Activated CD8-positive, alpha-beta T cell treated with anti-CD3 and anti-CD28 coated beads for 36 hours (primary cell): ENCODE measurements at regions of chr20 and their contacts with region 1.

Region 1: GRCh38 chr20:1108437-1108920 is 9.9 kb upstream of the PSMF1 start:
- DNase-seq: peak; percentile 74
- ATAC-seq: peak; percentile 87
- H3K4me3 Mint-ChIP-seq: no peak overlapping the region
- H3K27ac Mint-ChIP-seq: no peak overlapping the region
- H3K4me1 Mint-ChIP-seq: no peaks in the 10 kb centered on the region
- H3K27me3 Mint-ChIP-seq: no peaks in the 10 kb centered on the region
- CTCF ChIP-seq: peak; percentile 69

Region 2: DNA sequence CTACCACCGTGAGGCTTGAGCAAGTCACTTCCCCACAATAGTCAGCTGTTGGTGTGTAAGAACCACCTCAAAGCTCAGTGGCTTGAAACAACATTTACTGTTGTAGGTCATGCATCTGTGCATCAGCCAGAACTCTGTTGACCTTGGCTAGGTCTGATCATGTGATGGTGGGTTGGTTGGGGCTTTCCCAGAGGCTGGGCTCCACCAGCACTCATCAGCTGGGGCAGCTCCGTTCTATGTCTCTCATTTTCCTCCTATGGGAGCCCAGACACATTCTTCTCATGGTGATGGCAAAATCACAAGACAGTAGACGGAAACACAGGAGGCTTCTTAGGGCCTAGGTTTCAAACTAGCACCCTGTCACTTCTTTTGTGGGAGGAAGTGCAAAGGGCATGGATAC is 32.9 kb before region 1 on chr20:
- CTCF ChIA-PET with region 1: interaction called, 15 read pairs
- POLR2A ChIA-PET with region 1: no interaction called
- intact Hi-C with region 1: no loop called
- DNase-seq: peak; percentile 14
- ATAC-seq: no peak
- H3K4me3 Mint-ChIP-seq: no peak overlapping the region
- H3K27ac Mint-ChIP-seq: no peak overlapping the region
- H3K4me1 Mint-ChIP-seq: no peaks in the 10 kb centered on the region
- H3K27me3 Mint-ChIP-seq: peaks cover 1% of the 10 kb centered on the region
- CTCF ChIP-seq: no peak

Region 3: GRCh38 chr20:1086277-1087213 is 21.9 kb before region 1 on chr20:
- CTCF ChIA-PET with region 1: interaction called, 13 read pairs
- POLR2A ChIA-PET with region 1: no interaction called
- intact Hi-C with region 1: no loop called
- DNase-seq: no peak
- ATAC-seq: peak; percentile 80
- H3K4me3 Mint-ChIP-seq: no peak overlapping the region
- H3K27ac Mint-ChIP-seq: peak overlapping the region; percentile 55
- H3K4me1 Mint-ChIP-seq: peaks cover 26% of the 10 kb centered on the region
- H3K27me3 Mint-ChIP-seq: no peaks in the 10 kb centered on the region
- CTCF ChIP-seq: no peak

Region 4: GRCh38 chr20:1094751-1095150 is 13.7 kb before region 1 on chr20:
- CTCF ChIA-PET with region 1: interaction called, 19 read pairs
- POLR2A ChIA-PET with region 1: no interaction called
- intact Hi-C with region 1: no loop called
- DNase-seq: no peak
- ATAC-seq: no peak
- H3K4me3 Mint-ChIP-seq: no peak overlapping the region
- H3K27ac Mint-ChIP-seq: no peak overlapping the region
- H3K4me1 Mint-ChIP-seq: no peaks in the 10 kb centered on the region
- H3K27me3 Mint-ChIP-seq: no peaks in the 10 kb centered on the region
- CTCF ChIP-seq: no peak

Region 5: GRCh38 chr20:1118336-1119127 is 10.1 kb after region 1 on chr20 and contains the start of gene PSMF1:
- CTCF ChIA-PET with region 1: interaction called, 22 read pairs
- POLR2A ChIA-PET with region 1: no interaction called
- intact Hi-C with region 1: no loop called
- DNase-seq: peak; percentile 95
- ATAC-seq: peak; percentile 98
- H3K4me3 Mint-ChIP-seq: peak within 1 kb of the TSS; percentile 83
- H3K27ac Mint-ChIP-seq: peak within 1 kb of the TSS; percentile 82
- H3K4me1 Mint-ChIP-seq: peaks cover 49% of the 10 kb centered on the region
- H3K27me3 Mint-ChIP-seq: no peaks in the 10 kb centered on the region
- CTCF ChIP-seq: no peak
- total RNA-seq, gene PSMF1: 150 to 154 TPM

Region 6: DNA sequence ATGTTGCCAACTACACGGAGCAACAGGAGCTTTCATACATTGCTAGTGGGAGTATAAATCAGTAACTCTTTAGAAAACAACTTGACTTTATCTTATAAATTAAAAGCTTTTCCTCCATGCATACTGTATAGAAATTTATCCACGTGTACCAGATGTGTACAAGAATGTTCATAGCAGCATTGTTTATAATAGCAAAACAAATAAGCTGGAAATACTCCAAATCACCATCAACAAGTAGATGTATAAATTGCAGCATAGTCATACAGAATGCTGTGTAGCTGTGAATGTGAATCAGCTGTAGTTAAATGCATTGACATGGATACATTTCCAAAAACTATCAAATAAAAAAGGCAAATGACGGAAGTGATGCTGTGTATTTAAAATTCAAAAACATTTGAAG is 15.9 kb after region 1 on chr20:
- CTCF ChIA-PET with region 1: interaction called, 22 read pairs
- POLR2A ChIA-PET with region 1: no interaction called
- intact Hi-C with region 1: no loop called
- DNase-seq: no peak
- ATAC-seq: no peak
- H3K4me3 Mint-ChIP-seq: no peak overlapping the region
- H3K27ac Mint-ChIP-seq: no peak overlapping the region
- H3K4me1 Mint-ChIP-seq: peaks cover 48% of the 10 kb centered on the region
- H3K27me3 Mint-ChIP-seq: no peaks in the 10 kb centered on the region
- CTCF ChIP-seq: no peak

Region 7: DNA sequence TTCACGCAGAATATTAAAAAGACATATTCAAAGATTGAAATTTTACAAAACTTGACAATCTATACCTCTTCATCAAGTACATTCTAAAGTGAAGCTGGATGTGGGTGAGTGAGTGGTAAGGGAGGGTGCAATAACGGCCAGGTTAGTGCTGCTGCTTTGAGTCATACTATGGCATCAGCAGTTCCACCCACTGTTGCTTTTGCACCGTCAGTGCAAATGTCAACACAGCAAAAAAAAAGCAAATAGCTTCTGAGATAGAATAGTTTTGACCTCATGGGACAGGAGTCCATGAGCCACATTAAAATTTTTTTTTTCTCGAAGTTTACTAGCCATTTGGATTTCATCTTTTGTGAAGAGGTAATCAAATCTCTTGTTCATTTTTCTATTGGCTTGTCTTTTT is 41.7 kb after region 1 on chr20:
- CTCF ChIA-PET with region 1: interaction called, 11 read pairs
- POLR2A ChIA-PET with region 1: no interaction called
- intact Hi-C with region 1: no loop called
- DNase-seq: peak; percentile 51
- ATAC-seq: peak; percentile 86
- H3K4me3 Mint-ChIP-seq: no peak overlapping the region
- H3K27ac Mint-ChIP-seq: no peak overlapping the region
- H3K4me1 Mint-ChIP-seq: peaks cover 13% of the 10 kb centered on the region
- H3K27me3 Mint-ChIP-seq: no peaks in the 10 kb centered on the region
- CTCF ChIP-seq: no peak